T-cell (primary cell): ENCODE measurements at regions of chr1 and their contacts with region 1.

Region 1: DNA sequence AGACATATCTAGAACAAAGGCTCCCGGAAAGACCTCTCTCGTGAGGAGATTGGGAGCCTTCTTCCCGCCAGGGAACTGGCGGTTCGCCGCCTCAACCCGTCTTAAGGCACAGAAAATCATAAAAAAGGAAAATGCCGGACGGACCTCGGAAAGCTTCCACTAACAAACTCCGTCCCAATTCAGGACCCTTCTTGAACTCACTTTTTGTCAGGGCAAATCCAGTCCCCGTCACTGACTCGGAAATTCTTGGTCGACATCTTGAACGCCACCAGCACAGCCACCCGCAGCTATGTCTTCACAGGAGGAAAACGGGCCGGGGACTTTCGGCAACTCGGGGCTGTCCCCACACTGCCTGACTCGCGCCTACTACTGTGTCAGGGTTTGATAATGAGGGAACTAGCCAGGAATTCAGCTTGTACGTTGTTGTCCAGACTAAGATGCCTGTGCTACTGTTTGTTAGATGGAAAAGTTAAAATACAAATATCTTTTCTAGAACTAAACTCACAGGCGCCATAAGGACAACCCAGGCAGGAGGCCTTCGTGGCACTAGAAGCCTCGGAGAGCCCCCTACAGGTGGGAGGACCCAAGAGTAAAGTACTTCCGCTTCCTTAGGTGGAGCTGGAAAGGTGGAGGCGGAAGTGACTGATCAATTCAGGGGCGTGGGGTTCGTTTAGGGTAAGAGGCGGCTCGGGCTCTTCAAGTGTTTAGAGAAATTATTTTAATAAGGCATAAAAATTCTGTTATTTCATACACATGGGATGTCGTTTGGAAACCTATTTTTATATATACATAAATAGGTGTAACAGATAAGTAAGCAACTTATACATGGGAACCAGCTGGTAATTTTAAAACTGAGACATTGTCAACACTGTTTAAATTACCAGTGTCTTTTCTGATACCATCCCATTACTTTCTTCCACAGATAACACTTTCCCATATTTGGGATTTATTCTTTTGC is at the start of gene ZRANB2:
- DNase-seq: peak; percentile 80 to 95 (median 90)
- ATAC-seq: peak; percentile 96 to 98 (median 98)
- H3K4me3 ChIP-seq: peak within 1 kb of the TSS; percentile 83 to 98
- H3K4me3 Mint-ChIP-seq: peak within 1 kb of the TSS; percentile 89 to 98 (median 95)
- H3K27ac ChIP-seq: peak within 1 kb of the TSS; percentile 92
- H3K27ac Mint-ChIP-seq: peak within 1 kb of the TSS; percentile 99 to 100
- H3K4me1 ChIP-seq: peaks cover 7 to 13% of the 10 kb centered on the region in 2 experiments
- H3K4me1 Mint-ChIP-seq: peaks cover 24 to 40% (median 34%) of the 10 kb centered on the region in 3 donors
- H3K27me3 ChIP-seq: peaks cover 0 to 11% of the 10 kb centered on the region in 2 experiments
- H3K27me3 Mint-ChIP-seq: peaks cover 16 to 22% of the 10 kb centered on the region in 2 donors
- total RNA-seq, gene ZRANB2: 93.0 to 133 (median 127) TPM

Region 2: GRCh38 chr1:70221241-70222121 is 859.5 kb before region 1 on chr1 and contains the start of gene SRSF11:
- CTCF ChIA-PET with region 1: interaction called in 1 of 2 experiments, 6 read pairs
- POLR2A ChIA-PET with region 1: interaction called in 1 of 2 experiments, 10 read pairs
- DNase-seq: peak; percentile 92 to 99 (median 96)
- ATAC-seq: peak; percentile 94 to 98 (median 97)
- H3K4me3 ChIP-seq: peak within 1 kb of the TSS; percentile 81 to 88
- H3K4me3 Mint-ChIP-seq: peak within 1 kb of the TSS; percentile 79 to 92 (median 88)
- H3K27ac ChIP-seq: peak within 1 kb of the TSS; percentile 95
- H3K27ac Mint-ChIP-seq: peak within 1 kb of the TSS; percentile 93 to 97
- H3K4me1 ChIP-seq: peaks cover 8 to 23% of the 10 kb centered on the region in 2 experiments
- H3K4me1 Mint-ChIP-seq: peaks cover 51 to 57% (median 53%) of the 10 kb centered on the region in 3 donors
- H3K27me3 ChIP-seq: no peaks in the 10 kb centered on the region
- H3K27me3 Mint-ChIP-seq: no peaks in the 10 kb centered on the region
- total RNA-seq, gene SRSF11: 291 to 374 (median 302) TPM